Body of pancreas (tissue), 4 donors: ENCODE measurements at regions of chr12 and their contacts with region 1.

Region 1: DNA sequence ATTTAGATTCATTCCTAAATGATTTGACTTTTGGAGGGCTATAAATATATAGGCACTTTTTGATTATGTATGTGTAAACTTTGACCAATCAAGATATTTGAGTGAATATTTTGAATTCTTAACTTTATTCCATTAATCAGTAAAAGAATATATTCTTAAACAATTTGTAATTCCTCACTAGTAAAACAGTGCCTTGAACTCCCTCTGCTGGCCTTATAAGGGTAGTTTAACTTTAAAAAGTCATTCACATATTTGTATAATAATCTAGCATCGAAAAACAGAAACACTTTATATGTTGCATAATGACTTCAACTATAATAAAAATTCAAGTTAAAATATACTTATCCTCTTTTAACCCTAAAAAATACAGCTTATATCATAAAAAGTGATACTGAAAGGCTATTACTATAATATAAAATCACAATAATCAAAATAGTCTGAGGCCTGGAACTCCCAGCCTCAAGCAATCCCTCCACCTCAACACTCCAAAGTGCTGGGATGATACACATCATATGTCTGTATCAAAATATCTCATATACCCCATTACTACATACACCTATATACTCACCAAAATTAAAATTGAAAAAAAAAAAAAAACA is 31.2 kb downstream of the CCDC59 start:
- DNase-seq: no peak
- ATAC-seq: no peak
- H3K4me3 ChIP-seq: no peak overlapping the region
- H3K27ac ChIP-seq: no peak overlapping the region
- H3K4me1 ChIP-seq: no peaks in the 10 kb centered on the region
- H3K27me3 ChIP-seq: no peaks in the 10 kb centered on the region
- CTCF ChIP-seq: peak; percentile 5 to 57 (median 48)
- POLR2A ChIP-seq: no peak

Region 2: DNA sequence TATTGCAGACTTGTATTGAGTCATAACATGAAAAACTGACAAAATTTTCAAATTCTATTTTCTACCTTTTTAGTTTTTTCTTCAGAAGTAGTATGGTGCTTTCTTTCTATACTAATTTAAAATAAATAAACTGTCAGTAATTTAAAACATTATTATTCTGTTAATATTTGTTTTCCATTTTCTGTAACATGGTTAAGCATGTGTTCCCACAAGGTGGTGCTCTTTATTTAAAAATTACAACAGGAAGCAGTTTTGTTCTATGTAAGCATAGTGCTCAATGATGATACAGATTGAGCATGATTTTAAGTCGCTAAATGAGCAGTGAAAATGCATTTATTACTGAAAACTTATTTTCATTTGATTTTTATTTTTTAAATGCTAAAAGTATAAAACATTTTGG is 682.5 kb before region 1 on chr12:
- intact Hi-C with region 1: loop called (anchors 5 kb)
- DNase-seq: peak in 1 of 4 donors; percentile 15
- ATAC-seq: peak; percentile 71
- H3K4me3 ChIP-seq: no peak overlapping the region
- H3K27ac ChIP-seq: no peak overlapping the region
- H3K4me1 ChIP-seq: no peaks in the 10 kb centered on the region
- H3K27me3 ChIP-seq: no peaks in the 10 kb centered on the region
- CTCF ChIP-seq: peak; percentile 16 to 78 (median 70)
- POLR2A ChIP-seq: no peak

Region 3: GRCh38 chr12:82174936-82175335 is 152.1 kb before region 1 on chr12:
- intact Hi-C with region 1: no loop called
- DNase-seq: peak; percentile 21 to 39 (median 33)
- ATAC-seq: peak; percentile 64
- H3K4me3 ChIP-seq: no peak overlapping the region
- H3K27ac ChIP-seq: no peak overlapping the region
- H3K4me1 ChIP-seq: no peaks in the 10 kb centered on the region
- H3K27me3 ChIP-seq: no peaks in the 10 kb centered on the region
- CTCF ChIP-seq: no peak
- POLR2A ChIP-seq: no peak